Aorta (tissue), 5 donors: ENCODE measurements at regions of chr10 and their contacts with region 1.

Region 1: DNA sequence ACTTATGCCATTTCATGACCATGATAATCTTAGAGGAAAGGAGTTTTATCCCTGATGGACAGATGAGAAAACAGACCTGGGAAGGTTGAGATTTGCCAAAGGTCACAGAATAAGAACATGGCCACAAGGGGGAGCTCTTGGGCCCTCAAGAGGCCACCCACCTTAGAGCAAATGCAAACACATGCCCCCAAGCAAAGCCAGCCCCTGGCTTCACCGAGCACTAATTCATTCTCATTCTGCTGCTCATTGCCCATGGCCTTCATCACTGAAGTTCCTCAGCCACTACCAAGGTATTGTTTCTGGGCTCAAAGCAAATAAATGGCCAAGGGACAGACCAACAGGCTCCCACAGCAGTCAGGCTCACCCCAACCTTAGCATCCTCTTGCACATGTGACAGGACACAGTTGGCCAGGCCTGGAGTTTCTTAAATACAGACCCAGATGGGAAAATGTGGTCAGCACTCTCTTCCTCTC is 44.2 kb downstream of the PDLIM1 start:
- DNase-seq: peak; percentile 73 to 82
- ATAC-seq: peak; percentile 80
- H3K4me3 ChIP-seq: no peak overlapping the region
- H3K27ac ChIP-seq: peak overlapping the region; percentile 8 to 11
- H3K4me1 ChIP-seq: peaks cover 6 to 7% of the 10 kb centered on the region in 2 donors
- H3K27me3 ChIP-seq: no peaks in the 10 kb centered on the region

Region 2: DNA sequence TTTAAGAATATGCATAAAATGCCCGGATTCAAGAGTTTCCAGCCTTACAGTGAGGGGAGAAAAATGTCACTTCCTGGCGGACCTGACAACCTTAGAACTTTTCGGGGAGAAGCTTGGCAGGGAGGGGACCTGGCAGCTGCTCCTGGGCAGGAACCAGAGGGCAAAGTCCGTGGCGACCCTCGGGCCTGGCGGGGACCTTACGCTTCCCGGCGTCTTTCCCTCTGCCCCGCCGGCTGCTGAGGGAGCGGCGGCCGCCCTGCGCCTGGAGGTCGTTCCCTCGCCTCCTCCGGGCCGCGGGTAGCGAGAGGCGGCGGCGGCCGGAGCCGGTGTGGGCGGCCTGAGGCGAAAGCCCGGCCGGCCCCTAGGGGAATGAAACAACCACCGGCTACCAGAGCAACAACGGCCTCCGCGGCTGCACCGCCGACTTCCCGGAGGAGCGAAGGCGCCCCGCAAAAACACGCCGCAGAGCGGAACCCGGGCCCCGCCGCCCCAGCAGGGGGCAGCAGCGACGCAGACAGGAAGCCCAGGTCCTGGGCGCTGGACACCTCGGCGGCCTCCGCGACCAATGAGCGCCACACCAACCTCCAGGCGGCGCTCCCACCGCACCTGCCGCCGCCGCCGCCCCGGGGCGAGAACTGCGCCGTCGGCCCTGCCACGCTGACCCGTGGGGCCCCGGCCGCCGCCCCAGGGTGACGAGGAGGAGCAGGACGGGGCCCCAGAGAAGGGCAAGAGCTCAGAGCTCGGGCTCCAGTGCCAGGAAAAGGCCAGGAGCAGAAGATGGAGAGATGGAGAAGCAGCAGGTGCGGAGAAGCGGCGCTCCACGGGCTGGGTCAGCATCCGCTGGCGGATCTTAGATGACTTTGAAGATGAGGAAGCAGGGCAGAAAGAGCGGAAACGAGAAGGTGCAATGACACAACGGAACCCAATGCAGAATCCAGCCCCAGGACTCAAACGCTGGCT is 63.1 kb before region 1 on chr10:
- intact Hi-C with region 1: loop called (anchors 5 kb)
- DNase-seq: peak; percentile 90 to 97
- ATAC-seq: peak; percentile 97
- H3K4me3 ChIP-seq: peak overlapping the region; percentile 39 to 76
- H3K27ac ChIP-seq: peak overlapping the region in 1 of 2 donors; percentile 72
- H3K4me1 ChIP-seq: no peaks in the 10 kb centered on the region
- H3K27me3 ChIP-seq: no peaks in the 10 kb centered on the region

Region 3: GRCh38 chr10:95201736-95202135 is 44.9 kb before region 1 on chr10:
- intact Hi-C with region 1: loop called in 1 of 2 experiments (anchors 5 kb)
- DNase-seq: no peak
- ATAC-seq: no peak
- H3K4me3 ChIP-seq: no peak overlapping the region
- H3K27ac ChIP-seq: no peak overlapping the region
- H3K4me1 ChIP-seq: no peaks in the 10 kb centered on the region
- H3K27me3 ChIP-seq: no peaks in the 10 kb centered on the region

Region 4: DNA sequence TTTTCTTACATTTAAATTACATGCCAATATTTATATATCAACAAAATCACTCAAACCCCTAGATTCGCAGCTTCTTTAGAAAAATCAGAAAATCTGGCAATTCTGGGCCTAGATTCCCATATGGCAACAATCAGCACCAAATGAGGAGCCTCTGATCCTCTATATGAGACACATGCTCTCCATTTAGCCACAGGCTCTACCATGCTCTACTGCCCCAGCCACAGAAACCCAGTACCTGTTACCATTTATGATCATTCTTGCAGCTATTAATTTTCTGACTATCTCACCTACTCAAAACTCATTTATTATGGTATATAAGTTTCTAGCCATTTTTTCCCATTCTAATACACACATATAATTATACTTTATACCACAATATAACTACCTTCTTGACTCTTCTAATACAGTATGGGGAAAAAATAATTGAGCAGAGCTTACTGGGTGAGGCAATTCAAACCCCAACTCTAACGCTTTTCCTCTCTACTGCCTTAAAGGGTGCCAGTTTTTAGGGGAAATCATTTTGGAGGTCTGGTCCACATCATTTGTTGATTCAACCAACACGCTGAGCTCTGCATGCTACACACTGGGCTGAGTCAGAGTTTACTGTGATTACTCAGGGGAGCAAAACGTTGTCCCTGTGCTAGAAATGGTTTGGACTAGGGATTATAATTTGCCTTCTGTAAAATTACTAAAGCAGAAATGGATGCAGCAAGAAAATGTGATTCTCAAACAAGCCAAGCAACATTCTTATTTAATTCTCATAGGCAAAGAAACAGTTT is 32.6 kb after region 1 on chr10:
- intact Hi-C with region 1: no loop called
- DNase-seq: no peak
- ATAC-seq: peak; percentile 45
- H3K4me3 ChIP-seq: no peak overlapping the region
- H3K27ac ChIP-seq: peak overlapping the region in 1 of 2 donors; percentile 68
- H3K4me1 ChIP-seq: peaks cover 6 to 9% of the 10 kb centered on the region in 2 donors
- H3K27me3 ChIP-seq: no peaks in the 10 kb centered on the region

Region 5: GRCh38 chr10:95289003-95289920 is 42.6 kb after region 1 on chr10:
- intact Hi-C with region 1: loop called (anchors 5 kb)
- DNase-seq: no peak
- ATAC-seq: no peak
- H3K4me3 ChIP-seq: peak overlapping the region; percentile 85 to 94
- H3K27ac ChIP-seq: peak overlapping the region in 1 of 2 donors; percentile 60
- H3K4me1 ChIP-seq: peaks cover 0 to 4% of the 10 kb centered on the region in 2 donors
- H3K27me3 ChIP-seq: no peaks in the 10 kb centered on the region

Region 6: DNA sequence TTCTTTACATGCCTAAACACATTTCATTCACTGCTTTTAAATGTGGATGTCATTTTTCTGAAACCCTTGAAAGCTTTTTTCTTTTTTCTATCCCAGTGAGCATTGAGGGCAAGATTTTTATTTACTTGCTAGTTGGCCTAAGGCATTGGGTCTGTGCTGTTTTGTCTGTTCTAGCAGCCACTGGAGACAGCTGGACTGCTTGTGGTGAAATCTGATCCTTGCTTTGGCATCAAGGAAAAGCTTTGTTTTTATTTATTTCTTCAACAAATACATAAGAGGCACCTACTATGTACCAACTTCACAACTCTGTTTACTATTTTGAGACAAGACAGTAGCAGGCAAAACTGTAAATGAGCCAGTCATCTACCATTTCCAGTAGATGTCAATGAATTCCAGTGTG is 72.6 kb after region 1 on chr10:
- intact Hi-C with region 1: loop called in 1 of 2 experiments (anchors 10 kb)
- DNase-seq: no peak
- ATAC-seq: no peak
- H3K4me3 ChIP-seq: no peak overlapping the region
- H3K27ac ChIP-seq: no peak overlapping the region
- H3K4me1 ChIP-seq: peaks cover 2 to 3% of the 10 kb centered on the region in 2 donors
- H3K27me3 ChIP-seq: no peaks in the 10 kb centered on the region

Region 7: DNA sequence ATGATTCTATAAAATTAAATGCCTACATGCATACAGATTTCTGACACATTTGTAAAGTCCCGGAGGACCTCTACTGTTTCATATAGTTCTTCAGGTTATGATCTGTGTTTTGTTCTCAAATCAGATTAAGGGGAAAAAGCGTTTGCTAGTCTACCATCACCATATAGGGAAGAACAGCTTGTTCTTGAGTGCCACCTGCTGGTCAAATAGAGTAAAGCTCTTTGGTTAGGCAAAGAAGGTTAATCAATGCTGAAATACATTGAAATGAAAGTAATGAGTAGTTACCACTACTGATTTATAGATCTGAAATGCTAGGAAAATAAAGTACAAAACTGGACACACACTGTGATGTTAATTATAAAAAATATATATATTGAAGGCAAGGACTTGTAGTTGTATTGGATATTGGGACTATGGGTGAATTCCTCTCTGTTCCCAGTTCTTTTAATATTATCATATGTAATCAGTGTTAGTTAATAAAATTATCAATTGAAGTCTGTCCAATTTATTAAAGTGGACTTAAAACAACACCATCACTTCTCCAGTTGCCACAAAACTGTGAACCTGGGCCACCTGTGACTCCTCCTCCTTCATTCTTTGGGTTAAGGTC is 116.8 kb after region 1 on chr10:
- intact Hi-C with region 1: loop called (anchors 1 to 10 kb)
- DNase-seq: no peak
- ATAC-seq: peak; percentile 61
- H3K4me3 ChIP-seq: no peak overlapping the region
- H3K27ac ChIP-seq: peak overlapping the region in 1 of 2 donors; percentile 49
- H3K4me1 ChIP-seq: peaks cover 0 to 8% of the 10 kb centered on the region in 2 donors
- H3K27me3 ChIP-seq: no peaks in the 10 kb centered on the region

Region 8: DNA sequence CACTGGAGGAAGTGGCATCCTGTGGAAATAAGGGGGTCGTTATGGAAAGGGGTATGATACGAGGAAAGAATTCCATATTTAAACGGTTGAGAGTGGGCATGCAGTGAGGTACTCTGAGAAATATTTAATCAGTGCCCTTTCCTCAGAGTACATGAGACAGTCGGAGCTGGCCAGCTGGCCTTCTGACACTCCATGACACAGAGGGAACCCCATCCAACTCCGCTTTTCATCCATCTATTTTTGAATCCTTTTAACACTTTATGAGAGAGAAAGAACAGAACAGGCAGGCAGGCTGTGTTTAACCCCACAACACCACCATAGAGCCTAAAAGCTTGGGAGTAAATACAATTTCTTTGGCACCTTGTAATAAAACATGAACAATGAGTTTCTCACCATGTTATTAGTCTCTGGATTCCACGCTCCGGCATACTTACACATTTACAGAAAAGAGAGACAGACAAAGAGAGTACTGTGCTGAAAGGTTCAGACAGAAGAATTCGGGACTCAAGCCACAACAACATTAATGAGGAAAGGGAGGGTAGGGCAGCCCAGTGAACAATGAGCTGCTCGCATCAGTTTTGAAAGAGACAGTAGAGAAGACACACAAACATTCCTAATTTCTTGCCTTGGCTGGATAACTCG is 168.3 kb after region 1 on chr10:
- intact Hi-C with region 1: no loop called
- DNase-seq: peak; percentile 70 to 84
- ATAC-seq: peak; percentile 74
- H3K4me3 ChIP-seq: no peak overlapping the region
- H3K27ac ChIP-seq: peak overlapping the region; percentile 39 to 84
- H3K4me1 ChIP-seq: peaks cover 8 to 14% of the 10 kb centered on the region in 2 donors
- H3K27me3 ChIP-seq: no peaks in the 10 kb centered on the region

Region 9: GRCh38 chr10:95601116-95601719 is 354.6 kb after region 1 on chr10:
- intact Hi-C with region 1: loop called in 1 of 2 experiments (anchors 10 kb)
- DNase-seq: peak; percentile 85 to 88
- ATAC-seq: peak; percentile 90
- H3K4me3 ChIP-seq: no peak overlapping the region
- H3K27ac ChIP-seq: no peak overlapping the region
- H3K4me1 ChIP-seq: peaks cover 0 to 10% of the 10 kb centered on the region in 2 donors
- H3K27me3 ChIP-seq: no peaks in the 10 kb centered on the region